ENCODE measurements at regions of chr2 and their contacts with region 1.

Region 1: GRCh38 chr2:233854241-233854981 is at the start of gene HJURP:
- DNase-seq: peak; percentile 76 to 92 (median 87)
- ATAC-seq: peak; percentile 96
- H3K4me3 ChIP-seq: peak within 1 kb of the TSS; percentile 97
- H3K4me3 Mint-ChIP-seq: peak within 1 kb of the TSS; percentile 83 to 98 (median 92)
- H3K27ac ChIP-seq: peak within 1 kb of the TSS; percentile 26
- H3K27ac Mint-ChIP-seq: peak within 1 kb of the TSS in 8 of 9 donors; percentile 53 to 95 (median 75)
- H3K4me1 ChIP-seq: peaks cover 0 to 6% of the 10 kb centered on the region in 2 donors
- H3K4me1 Mint-ChIP-seq: peaks cover 12 to 68% (median 18%) of the 10 kb centered on the region in 7 donors
- H3K27me3 ChIP-seq: no peaks in the 10 kb centered on the region
- H3K27me3 Mint-ChIP-seq: peaks cover 0 to 7% (median 5%) of the 10 kb centered on the region in 5 donors
- total RNA-seq, gene HJURP: 0.11 to 67.1 (median 0.27) TPM in 3 of 5 experiments, not detected in the others

Region 2: GRCh38 chr2:233418761-233419625 is 435.4 kb before region 1 on chr2:
- CTCF ChIA-PET with region 1: no interaction called
- POLR2A ChIA-PET with region 1: no interaction called
- intact Hi-C with region 1: loop called in 1 of 2 experiments (anchors 10 kb)
- DNase-seq: peak in 6 of 9 donors; percentile 40 to 69 (median 50)
- ATAC-seq: peak; percentile 74
- H3K4me3 ChIP-seq: peak overlapping the region; percentile 70
- H3K4me3 Mint-ChIP-seq: peak overlapping the region; percentile 84 to 99 (median 92)
- H3K27ac ChIP-seq: peak overlapping the region; percentile 80
- H3K27ac Mint-ChIP-seq: peak overlapping the region; percentile 86 to 99 (median 97)
- H3K4me1 ChIP-seq: peaks cover 65 to 93% of the 10 kb centered on the region in 2 donors
- H3K4me1 Mint-ChIP-seq: peaks cover 78 to 100% (median 96%) of the 10 kb centered on the region in 7 donors
- H3K27me3 ChIP-seq: no peaks in the 10 kb centered on the region
- H3K27me3 Mint-ChIP-seq: no peaks in the 10 kb centered on the region

Region 3: DNA sequence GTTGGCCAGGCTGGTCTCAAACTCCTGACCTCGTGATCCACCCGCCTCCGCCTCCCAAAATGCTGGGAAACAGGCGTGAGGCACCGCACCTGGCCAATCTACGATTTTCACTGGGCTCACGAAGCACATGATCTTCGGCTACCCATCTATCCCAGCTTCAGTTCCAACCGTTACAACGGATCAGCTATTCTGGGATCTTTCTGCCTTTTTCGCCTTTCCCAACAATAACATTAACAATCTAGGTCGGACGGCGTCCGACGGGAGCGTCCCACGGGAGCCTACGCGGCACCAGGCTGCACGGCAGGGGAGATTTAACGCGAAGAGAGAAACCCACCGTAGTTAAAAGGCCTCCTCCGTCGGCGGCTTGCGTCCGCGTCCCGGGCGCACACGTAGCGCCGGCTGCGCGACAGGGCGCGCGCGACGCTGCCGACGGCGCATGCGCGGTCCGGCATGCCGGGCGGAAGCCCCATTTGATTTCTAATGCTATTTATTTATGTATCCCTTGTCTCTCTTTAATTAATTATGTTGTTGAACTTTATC is 13.7 kb after region 1 on chr2 and contains the start of gene MSL3B:
- CTCF ChIA-PET with region 1: interaction called, 4 read pairs
- POLR2A ChIA-PET with region 1: no interaction called
- intact Hi-C with region 1: loop called (anchors 1 kb)
- DNase-seq: peak; percentile 43 to 69 (median 63)
- ATAC-seq: peak; percentile 68
- H3K4me3 ChIP-seq: peak within 1 kb of the TSS; percentile 73
- H3K4me3 Mint-ChIP-seq: peak within 1 kb of the TSS; percentile 83 to 98 (median 92)
- H3K27ac ChIP-seq: peak within 1 kb of the TSS; percentile 56
- H3K27ac Mint-ChIP-seq: peak within 1 kb of the TSS; percentile 68 to 95 (median 86)
- H3K4me1 ChIP-seq: no peaks in the 10 kb centered on the region
- H3K4me1 Mint-ChIP-seq: peaks cover 3 to 29% (median 8%) of the 10 kb centered on the region in 7 donors
- H3K27me3 ChIP-seq: no peaks in the 10 kb centered on the region
- H3K27me3 Mint-ChIP-seq: peaks cover 23 to 34% (median 33%) of the 10 kb centered on the region in 5 donors

Region 4: GRCh38 chr2:234102112-234102511 is 247.7 kb after region 1 on chr2:
- CTCF ChIA-PET with region 1: no interaction called
- POLR2A ChIA-PET with region 1: no interaction called
- intact Hi-C with region 1: loop called in 1 of 2 experiments (anchors 5 kb)
- DNase-seq: peak in 7 of 9 donors; percentile 16 to 64 (median 47)
- ATAC-seq: peak; percentile 73
- H3K4me3 ChIP-seq: no peak overlapping the region
- H3K4me3 Mint-ChIP-seq: peak overlapping the region in 8 of 10 donors; percentile 4 to 64 (median 28)
- H3K27ac ChIP-seq: no peak overlapping the region
- H3K27ac Mint-ChIP-seq: peak overlapping the region in 3 of 9 donors; percentile 9 to 64 (median 43)
- H3K4me1 ChIP-seq: peaks cover 36 to 37% of the 10 kb centered on the region in 2 donors
- H3K4me1 Mint-ChIP-seq: peaks cover 25 to 55% (median 43%) of the 10 kb centered on the region in 7 donors
- H3K27me3 ChIP-seq: no peaks in the 10 kb centered on the region
- H3K27me3 Mint-ChIP-seq: peaks cover 0 to 30% (median 0%) of the 10 kb centered on the region in 5 donors

Region 5: DNA sequence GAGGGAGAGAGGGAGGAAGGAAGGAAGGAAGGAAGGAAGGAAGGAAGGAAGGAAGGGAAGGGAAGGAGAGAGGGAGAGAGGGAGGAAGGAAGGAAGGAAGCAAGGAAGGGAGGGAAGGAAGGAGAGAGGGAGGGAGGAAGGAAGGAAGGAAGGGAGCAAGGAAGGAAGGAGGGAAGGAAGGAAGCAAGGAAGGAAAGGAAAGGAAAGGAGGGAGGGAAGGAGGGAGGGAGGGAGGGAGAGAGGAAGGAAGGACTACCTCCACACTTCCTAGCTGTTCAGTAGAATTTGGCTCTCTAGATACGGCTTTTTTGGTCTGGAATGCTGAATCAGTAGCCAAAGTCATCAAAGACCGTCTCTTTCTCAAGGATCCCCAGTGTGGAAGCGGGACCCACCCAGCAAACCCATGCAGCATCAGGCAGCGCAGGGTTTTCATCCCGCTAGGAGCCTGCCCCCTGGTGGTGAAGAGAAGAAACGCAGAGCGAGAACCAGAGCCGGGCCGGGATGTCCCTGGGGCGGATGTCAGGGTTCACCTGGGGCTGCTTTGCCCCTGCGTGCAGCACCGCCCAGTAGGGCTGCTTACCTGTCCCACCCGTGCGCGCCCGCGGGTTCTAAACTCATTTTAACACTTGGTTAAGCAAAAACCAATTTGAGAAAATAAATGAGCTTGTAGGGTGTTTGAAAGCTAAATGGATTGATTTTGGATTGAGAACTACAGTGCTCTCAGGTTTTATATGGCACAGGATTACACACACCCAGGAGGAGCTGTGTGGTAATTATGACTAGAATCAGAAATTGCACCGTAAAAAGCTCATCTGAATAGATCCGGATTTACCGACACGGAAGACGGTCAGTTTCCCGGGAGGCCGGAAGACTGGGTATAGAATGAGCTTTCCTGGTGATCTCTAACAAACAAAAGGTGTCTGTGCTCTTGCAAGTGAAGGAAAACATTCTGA is 690.5 kb after region 1 on chr2:
- CTCF ChIA-PET with region 1: no interaction called
- POLR2A ChIA-PET with region 1: no interaction called
- intact Hi-C with region 1: loop called in 1 of 2 experiments (anchors 10 kb)
- DNase-seq: peak; percentile 54 to 83 (median 69)
- ATAC-seq: peak; percentile 93
- H3K4me3 ChIP-seq: no peak overlapping the region
- H3K4me3 Mint-ChIP-seq: no peak overlapping the region
- H3K27ac ChIP-seq: no peak overlapping the region
- H3K27ac Mint-ChIP-seq: no peak overlapping the region
- H3K4me1 ChIP-seq: peaks cover 0 to 5% of the 10 kb centered on the region in 2 donors
- H3K4me1 Mint-ChIP-seq: peaks cover 0 to 9% (median 1%) of the 10 kb centered on the region in 7 donors
- H3K27me3 ChIP-seq: no peaks in the 10 kb centered on the region
- H3K27me3 Mint-ChIP-seq: peaks cover under 1 to 31% (median 13%) of the 10 kb centered on the region in 5 donors